HEK293 (cell line): ENCODE measurements at regions of chr19 and their contacts with region 1.

Region 1: DNA sequence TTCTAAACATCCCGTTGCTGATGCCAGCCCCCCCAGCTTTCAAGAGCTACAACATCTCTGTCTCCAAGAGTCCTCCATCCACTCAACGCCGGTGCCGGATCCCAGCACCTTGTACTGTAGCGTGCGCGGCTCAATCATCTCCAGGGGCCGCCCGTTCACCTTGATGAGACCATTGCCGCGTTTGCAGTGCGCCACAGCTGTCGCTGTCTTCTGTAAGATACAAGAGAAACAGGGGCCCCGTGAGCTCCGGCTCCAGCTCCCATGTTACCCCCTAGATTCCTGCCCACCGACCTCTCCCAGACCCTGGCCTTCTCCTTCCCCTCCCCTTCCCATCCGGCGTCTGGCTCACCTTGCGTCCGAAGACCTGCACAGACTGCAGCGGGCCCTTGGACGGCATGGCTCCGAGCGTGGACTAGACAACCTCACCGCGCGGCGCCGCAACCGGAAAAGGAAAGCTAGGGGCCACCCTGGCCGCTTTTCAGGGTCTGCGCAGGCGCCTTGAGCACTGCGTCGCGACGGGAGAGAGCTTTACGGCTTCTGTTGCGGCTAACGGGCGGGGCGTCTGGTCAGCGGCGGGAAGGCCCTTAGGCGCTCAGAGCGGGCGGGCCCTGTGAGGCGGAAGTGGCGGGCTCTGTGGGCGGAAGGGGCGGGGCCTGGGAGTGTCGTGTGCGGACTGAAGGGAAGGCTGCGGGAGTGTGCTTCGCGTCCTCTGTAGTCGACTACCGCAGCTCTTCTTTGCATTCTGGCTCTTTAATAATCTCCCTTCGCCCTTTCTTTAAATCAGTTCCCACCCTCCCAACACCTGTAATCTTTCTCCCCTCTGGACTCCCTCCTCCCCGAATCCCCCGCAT is at the start of gene RPS16:
- H3K4me3 ChIP-seq: peak within 1 kb of the TSS; percentile 79
- H3K27ac ChIP-seq: peak within 1 kb of the TSS; percentile 100
- H3K4me1 ChIP-seq: peaks cover 29% of the 10 kb centered on the region
- CTCF ChIP-seq: peak; percentile 70; the same call in 1 of the 2 replicates

Region 2: GRCh38 chr19:38618590-38619360 is 816.9 kb before region 1 on chr19 and contains the start of gene EIF3K:
- CTCF ChIA-PET with region 1: no interaction called
- POLR2A ChIA-PET with region 1: interaction called, 13 read pairs
- H3K4me3 ChIP-seq: peak within 1 kb of the TSS; percentile 65
- H3K27ac ChIP-seq: peak within 1 kb of the TSS; percentile 94
- H3K4me1 ChIP-seq: peaks cover 16% of the 10 kb centered on the region
- CTCF ChIP-seq: no peak

Region 3: DNA sequence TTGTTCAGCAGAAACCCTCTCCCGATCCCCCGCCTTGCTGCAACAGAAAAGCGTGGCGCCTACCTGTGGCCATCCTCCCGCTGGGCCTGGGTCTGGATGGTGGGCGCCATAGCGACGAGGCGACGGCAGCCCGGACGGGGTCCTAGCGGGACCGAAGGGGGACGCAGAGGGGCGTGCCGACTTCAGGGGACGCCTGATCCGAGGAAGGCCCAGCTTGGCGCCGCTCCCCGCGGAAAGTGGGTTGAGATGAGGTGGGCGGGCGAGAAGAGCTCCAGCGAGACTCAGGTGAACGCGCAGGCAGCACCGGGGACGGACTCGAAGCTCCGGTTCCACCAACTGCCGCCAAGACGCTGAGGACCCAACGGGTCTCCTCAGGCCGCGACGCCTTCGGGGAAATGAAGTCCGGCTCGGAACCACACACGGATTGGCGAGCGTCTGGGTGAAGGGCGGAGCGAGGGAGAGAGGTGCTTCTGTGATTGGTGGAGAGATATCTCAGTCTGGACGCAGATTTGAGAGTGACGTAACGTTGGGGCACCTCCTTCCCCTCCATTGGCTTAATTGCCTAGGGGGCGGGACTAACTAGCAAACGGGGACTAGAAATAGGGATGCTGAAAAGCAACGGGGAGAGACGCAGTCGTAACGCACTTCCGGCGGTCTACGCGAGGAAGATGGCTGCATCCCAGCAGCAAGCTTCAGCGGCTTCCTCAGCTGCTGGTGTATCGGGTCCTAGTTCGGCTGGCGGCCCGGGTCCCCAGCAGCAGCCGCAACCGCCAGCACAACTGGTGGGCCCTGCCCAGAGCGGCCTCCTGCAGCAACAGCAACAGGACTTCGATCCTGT is 44.8 kb before region 1 on chr19 and contains the starts of genes MED29 and PAF1:
- CTCF ChIA-PET with region 1: interaction called, 4 read pairs
- POLR2A ChIA-PET with region 1: interaction called, 90 read pairs
- H3K4me3 ChIP-seq: peak within 1 kb of the TSS; percentile 68
- H3K27ac ChIP-seq: peak within 1 kb of the TSS; percentile 97
- H3K4me1 ChIP-seq: peaks cover 17% of the 10 kb centered on the region
- CTCF ChIP-seq: peak; percentile 100

Region 4: GRCh38 chr19:39423258-39424086 is 12.3 kb before region 1 on chr19:
- CTCF ChIA-PET with region 1: interaction called, 13 read pairs
- POLR2A ChIA-PET with region 1: interaction called, 255 read pairs
- H3K4me3 ChIP-seq: no peak overlapping the region
- H3K27ac ChIP-seq: peak overlapping the region; percentile 47; the same call in 1 of the 2 replicates
- H3K4me1 ChIP-seq: no peaks in the 10 kb centered on the region; the same call in 1 of the 2 replicates
- CTCF ChIP-seq: no peak

Region 5: DNA sequence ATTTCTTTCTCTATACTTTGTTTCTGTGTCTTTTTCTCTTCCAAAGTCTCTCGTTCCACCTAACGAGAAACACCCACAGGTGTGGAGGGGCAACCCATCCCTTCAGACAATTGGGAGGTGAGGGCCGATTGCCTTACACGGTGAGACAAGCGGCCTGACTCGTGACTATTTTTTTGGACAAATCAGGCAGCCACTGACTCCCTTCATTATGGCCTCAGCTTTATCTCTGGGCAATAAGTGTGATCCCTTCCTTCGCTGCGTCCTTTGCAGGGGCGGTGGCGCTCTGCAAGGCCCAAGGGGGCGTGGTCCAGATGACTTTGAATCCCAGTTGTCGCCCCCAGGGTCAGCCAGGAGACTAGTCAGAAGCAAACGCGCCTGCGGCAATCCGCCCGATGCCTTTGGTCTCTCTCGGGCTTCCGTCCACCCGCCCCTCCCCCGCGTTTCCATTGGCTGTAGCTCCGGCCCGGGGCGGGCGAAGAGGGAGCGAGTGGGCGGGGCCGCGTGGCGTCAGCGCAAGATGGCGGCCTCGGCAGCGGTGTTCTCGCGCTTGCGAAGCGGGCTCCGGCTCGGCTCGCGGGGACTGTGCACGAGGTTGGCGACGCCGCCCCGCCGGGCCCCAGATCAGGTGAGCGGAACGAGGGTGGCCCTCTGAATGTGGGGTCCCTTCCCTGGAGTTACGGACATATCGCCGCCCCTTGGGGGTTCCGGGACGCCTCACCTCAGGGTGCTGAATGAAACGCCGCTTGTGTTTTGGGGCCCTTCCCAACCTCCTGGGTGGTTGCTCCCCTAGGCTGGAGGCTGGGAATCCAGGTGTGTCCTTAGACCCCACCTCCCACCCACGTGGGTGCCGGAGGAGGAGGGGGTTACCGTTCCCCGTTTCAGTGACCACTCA is 44.9 kb after region 1 on chr19 and contains the start of gene TIMM50:
- CTCF ChIA-PET with region 1: interaction called, 8 read pairs
- POLR2A ChIA-PET with region 1: interaction called, 39 read pairs
- H3K4me3 ChIP-seq: peak within 1 kb of the TSS; percentile 65
- H3K27ac ChIP-seq: peak within 1 kb of the TSS; percentile 88
- H3K4me1 ChIP-seq: peaks cover 15% of the 10 kb centered on the region
- CTCF ChIP-seq: peak; percentile 96

Region 6: GRCh38 chr19:39524495-39524894 is 88.8 kb after region 1 on chr19:
- CTCF ChIA-PET with region 1: interaction called, 6 read pairs
- POLR2A ChIA-PET with region 1: interaction called, 18 read pairs
- H3K4me3 ChIP-seq: no peak overlapping the region
- H3K27ac ChIP-seq: no peak overlapping the region
- H3K4me1 ChIP-seq: 0 out of 2 replicates have a peak, but pooled peaks cover 4% of the 10 kb centered on the region
- CTCF ChIP-seq: no peak

Region 7: DNA sequence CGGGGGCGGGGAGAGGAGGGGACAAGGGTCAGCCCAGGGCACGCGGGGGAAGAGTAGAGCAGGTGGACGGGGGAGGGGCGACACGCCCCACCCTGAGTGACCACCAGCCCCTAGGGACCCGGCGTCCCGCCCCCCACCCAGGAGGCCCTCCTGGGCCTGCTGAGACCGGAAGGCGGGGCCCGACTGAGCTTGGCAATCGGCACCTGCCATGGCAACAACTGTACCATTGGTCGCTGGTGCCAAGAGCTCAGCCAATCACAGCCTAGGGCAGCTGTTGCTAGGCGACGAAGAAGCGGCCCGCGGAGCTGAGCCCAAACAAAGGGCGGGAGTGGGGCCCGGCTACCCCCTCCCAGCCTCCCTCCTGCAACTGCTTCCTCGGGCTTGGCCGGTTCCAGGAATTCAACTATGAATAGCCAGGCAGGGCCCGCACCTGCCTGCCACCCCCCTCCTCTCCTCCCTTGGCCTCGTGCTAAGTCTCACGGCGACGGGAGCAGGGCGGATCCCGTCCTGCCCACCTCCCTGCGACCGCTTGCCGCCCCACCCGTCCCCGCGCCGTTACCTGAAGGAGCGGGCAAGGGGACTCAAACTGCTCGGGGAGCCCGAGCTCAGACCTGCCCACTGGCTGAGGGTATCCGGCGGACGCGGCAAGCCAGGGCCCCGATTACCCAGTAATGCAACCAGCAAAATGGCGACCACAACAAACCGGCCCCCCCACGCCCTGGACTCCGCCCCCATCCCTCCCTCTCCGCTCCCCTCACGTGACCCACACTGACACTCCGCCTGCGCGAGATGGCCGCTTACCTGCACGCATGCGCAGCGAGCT is 398.0 kb after region 1 on chr19 and contains the start of gene DYRK1B:
- CTCF ChIA-PET with region 1: no interaction called
- POLR2A ChIA-PET with region 1: interaction called, 26 read pairs
- H3K4me3 ChIP-seq: peak within 1 kb of the TSS; percentile 64
- H3K27ac ChIP-seq: peak within 1 kb of the TSS; percentile 95
- H3K4me1 ChIP-seq: peaks cover 18% of the 10 kb centered on the region
- CTCF ChIP-seq: peak; percentile 5; the same call in 1 of the 2 replicates